ENCODE measurements at regions of chr4 and their contacts with region 1.

Region 1: GRCh38 chr4:75653845-75654503 is 19.2 kb downstream of the G3BP2 start:
- DNase-seq: no peak
- H3K4me3 Mint-ChIP-seq: peak overlapping the region; percentile 64
- H3K27ac Mint-ChIP-seq: peak overlapping the region; percentile 89
- H3K4me1 Mint-ChIP-seq: peaks cover 53% of the 10 kb centered on the region
- H3K27me3 Mint-ChIP-seq: no peaks in the 10 kb centered on the region

Region 2: GRCh38 chr4:75630174-75630936 is 23.6 kb before region 1 on chr4 and contains the start of gene CDKL2:
- intact Hi-C with region 1: loop called (anchors 2 kb)
- DNase-seq: peak; percentile 87
- H3K4me3 Mint-ChIP-seq: peak within 1 kb of the TSS; percentile 82
- H3K27ac Mint-ChIP-seq: peak within 1 kb of the TSS; percentile 56
- H3K4me1 Mint-ChIP-seq: peaks cover 12% of the 10 kb centered on the region
- H3K27me3 Mint-ChIP-seq: peaks cover 6% of the 10 kb centered on the region
- total RNA-seq, gene CDKL2: 0.23 and 0.57 TPM in 2 replicates

Region 3: GRCh38 chr4:75708218-75708691 is 54.3 kb after region 1 on chr4:
- intact Hi-C with region 1: loop called (anchors 1 kb)
- DNase-seq: peak; percentile 28
- H3K4me3 Mint-ChIP-seq: no peak overlapping the region
- H3K27ac Mint-ChIP-seq: no peak overlapping the region
- H3K4me1 Mint-ChIP-seq: peaks cover 5% of the 10 kb centered on the region
- H3K27me3 Mint-ChIP-seq: no peaks in the 10 kb centered on the region

Measured in activated T-helper 2 cell treated with anti-CD3 and anti-CD28 coated beads, Interferon-gamma antibody, Interleukin-2, Interleukin-4, amounts not matched to agents 10 μg/mL and 5 μg/mL and 100 μg/mL, durations not matched to agents 14 hours and 24 hours and 36 hours (primary cell).